ENCODE measurements at regions of chr19 and their contacts with region 1.

Region 1: DNA sequence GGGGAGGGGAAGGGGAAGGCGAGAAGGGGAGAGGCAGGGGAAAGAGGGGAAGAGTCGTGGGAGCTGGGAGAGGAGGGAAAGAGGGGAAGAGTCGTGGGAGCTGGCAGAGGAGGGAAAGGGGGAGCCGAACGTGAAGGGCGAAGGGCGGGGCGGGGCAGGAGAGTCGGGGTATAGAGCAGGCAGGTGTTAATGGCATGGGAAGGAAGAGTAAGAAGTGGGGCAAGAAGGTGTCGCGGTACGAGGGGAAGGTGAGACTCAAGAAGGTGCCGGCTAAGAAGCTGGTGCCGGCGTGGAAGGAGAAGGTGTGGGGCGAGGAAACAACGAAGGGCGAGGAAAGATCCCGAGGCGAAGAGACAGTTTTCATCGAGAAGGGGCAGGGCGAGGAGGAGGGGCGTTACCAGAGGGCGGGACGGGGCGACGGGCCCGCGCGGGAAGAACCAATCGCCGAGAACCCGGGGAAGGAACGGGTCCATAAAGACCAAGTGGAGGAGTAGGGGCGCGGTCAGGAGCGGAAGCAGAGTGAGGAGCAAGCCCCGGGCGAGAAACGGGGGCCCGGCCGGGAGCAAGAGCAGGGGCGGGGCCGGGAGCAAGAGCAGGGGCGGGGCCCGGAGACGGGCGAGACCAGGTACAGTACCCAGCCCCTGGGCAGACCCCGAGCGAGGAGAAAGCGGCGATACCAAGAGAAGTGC is 463 bp downstream of the CATSPERG start:
- DNase-seq: peak; percentile 95 to 97
- ATAC-seq: peak; percentile 88 to 93 (median 88)
- H3K4me3 ChIP-seq: peak overlapping the region; percentile 73
- H3K27ac ChIP-seq: peak overlapping the region; percentile 96
- H3K4me1 ChIP-seq: peaks cover 8% of the 10 kb centered on the region
- H3K27me3 ChIP-seq: no peaks in the 10 kb centered on the region
- CTCF ChIP-seq: no peak

Region 2: DNA sequence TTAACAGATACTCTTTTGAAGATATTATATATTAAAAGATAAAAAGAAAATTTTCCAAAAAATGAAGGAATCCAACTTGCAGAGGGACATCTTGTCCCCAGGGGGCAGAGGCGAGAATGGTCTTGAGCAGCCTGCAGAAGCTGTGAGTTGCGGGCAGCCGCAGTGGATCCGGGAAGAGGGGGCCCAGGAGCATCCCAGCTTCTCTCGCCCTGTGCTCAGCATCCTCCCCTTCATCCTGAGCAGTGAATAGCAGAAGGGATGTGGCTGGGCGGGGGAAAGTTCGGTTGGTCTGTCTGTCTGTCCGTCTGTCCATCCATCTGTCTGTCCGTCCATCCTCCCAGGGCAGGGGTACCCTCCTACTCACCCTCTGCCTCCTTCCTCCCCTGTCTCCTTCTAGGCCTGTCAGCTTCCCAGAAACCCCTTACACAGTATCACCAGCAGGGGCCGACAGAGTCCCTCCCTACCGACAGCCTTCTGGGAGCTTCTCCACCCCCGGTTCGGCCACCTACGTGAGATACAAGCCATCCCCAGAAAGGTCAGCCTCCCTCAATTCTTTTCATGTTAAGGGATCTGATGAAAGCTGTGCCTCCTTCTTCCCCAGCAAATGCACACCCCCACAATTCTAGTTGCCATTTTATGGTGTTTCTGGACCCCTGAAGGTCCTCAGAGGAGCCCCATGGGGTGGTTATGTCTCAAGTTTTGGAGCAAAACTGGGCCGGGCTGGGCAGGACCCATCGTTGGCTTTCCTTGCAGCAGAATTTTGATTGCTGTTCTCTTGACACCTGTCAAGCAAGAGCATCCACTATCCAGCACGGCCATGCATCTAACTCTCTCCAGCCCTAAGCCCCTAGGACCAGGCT is 193.7 kb before region 1 on chr19:
- intact Hi-C with region 1: loop called (anchors 2 to 5 kb)
- DNase-seq: peak; percentile 67 to 84
- ATAC-seq: peak; percentile 85 to 88 (median 85)
- H3K4me3 ChIP-seq: no peak overlapping the region
- H3K27ac ChIP-seq: no peak overlapping the region
- H3K4me1 ChIP-seq: no peaks in the 10 kb centered on the region
- H3K27me3 ChIP-seq: no peaks in the 10 kb centered on the region
- CTCF ChIP-seq: peak; percentile 69

Region 3: DNA sequence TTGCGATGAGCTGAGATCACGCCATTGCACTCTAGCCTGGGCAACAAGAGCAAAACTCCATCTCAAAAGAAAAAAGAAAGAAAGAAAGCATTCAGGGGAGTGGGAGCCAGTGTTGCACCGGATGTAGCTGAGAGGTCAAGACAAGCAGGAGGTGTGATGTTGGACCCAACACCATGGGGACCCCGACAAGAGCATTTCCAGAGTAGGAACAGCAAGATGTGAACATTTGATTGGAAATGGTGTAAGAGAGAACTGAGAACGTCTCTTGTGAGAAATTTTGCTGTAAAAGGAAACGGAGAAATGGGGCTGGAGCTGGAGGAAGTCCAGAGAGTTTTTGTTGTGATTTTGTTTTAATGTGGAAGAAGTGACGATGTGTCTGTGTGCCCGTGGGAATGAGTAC is 96.3 kb before region 1 on chr19:
- intact Hi-C with region 1: loop called (anchors 1 to 5 kb)
- DNase-seq: no peak
- ATAC-seq: no peak
- H3K4me3 ChIP-seq: no peak overlapping the region
- H3K27ac ChIP-seq: no peak overlapping the region
- H3K4me1 ChIP-seq: no peaks in the 10 kb centered on the region
- H3K27me3 ChIP-seq: peaks cover 0 to 12% (median 2%) of the 10 kb centered on the region in 3 donors
- CTCF ChIP-seq: no peak

Region 4: DNA sequence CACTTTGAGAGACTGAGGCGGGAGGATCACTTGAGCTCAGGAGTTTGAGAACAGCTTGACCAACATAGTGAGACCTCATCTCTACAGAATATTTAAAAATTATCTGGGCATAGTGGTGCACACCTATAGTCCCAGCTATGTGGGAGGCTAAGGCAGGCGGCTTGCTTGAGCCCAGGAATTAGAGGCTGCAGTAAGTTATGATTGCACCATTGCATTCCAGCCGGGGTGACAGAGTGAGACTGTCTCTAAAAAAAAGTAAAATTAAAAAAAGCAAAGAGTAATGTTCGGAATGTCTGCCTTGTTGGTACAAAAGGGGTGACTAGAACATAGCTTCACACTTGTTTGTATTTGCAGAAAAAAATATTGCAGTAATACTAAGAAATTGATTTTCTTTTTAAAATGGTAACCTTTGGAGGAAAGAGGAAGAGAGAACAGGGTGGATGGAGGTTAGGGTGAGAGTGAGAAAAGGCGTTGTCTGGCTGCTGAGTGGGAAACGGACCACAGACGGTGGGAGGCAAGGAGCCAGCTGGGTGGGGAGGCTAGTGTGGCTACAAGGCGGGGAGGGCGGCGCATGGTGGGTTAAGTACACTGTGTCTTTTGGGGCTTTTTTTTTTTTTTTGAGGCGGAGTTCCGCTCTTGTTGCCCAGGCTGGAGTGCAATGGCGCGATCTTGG is 90.1 kb before region 1 on chr19:
- intact Hi-C with region 1: loop called (anchors 1 to 5 kb)
- DNase-seq: no peak
- ATAC-seq: no peak
- H3K4me3 ChIP-seq: no peak overlapping the region
- H3K27ac ChIP-seq: no peak overlapping the region
- H3K4me1 ChIP-seq: no peaks in the 10 kb centered on the region
- H3K27me3 ChIP-seq: peaks cover 0 to 5% (median 0%) of the 10 kb centered on the region in 3 donors
- CTCF ChIP-seq: no peak

Region 5: DNA sequence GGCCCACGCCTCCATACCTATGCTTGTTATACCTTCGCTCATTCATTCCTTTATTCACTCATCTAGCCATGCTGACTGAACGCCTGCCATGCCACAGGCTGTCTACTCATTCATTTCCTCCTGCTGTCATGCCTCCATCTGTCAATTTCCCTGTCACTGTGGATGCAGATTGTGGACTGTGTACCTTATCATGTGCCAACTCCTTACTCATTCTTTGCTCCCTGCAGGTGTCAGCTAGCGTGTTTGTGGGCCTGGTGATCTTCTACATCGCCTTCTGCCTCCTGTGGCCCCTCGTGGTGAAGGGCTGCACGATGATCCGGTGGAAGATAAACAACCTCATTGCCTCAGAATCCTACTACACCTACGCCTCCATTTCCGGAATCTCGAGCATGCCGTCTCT is 34.2 kb after region 1 on chr19:
- intact Hi-C with region 1: loop called (anchors 2 kb)
- DNase-seq: no peak
- ATAC-seq: no peak
- H3K4me3 ChIP-seq: no peak overlapping the region
- H3K27ac ChIP-seq: no peak overlapping the region
- H3K4me1 ChIP-seq: peaks cover 5% of the 10 kb centered on the region
- H3K27me3 ChIP-seq: peaks cover 0 to 7% (median 2%) of the 10 kb centered on the region in 3 donors
- CTCF ChIP-seq: no peak